ENCODE measurements at regions of chr18 and their contacts with region 1.

Region 1: DNA sequence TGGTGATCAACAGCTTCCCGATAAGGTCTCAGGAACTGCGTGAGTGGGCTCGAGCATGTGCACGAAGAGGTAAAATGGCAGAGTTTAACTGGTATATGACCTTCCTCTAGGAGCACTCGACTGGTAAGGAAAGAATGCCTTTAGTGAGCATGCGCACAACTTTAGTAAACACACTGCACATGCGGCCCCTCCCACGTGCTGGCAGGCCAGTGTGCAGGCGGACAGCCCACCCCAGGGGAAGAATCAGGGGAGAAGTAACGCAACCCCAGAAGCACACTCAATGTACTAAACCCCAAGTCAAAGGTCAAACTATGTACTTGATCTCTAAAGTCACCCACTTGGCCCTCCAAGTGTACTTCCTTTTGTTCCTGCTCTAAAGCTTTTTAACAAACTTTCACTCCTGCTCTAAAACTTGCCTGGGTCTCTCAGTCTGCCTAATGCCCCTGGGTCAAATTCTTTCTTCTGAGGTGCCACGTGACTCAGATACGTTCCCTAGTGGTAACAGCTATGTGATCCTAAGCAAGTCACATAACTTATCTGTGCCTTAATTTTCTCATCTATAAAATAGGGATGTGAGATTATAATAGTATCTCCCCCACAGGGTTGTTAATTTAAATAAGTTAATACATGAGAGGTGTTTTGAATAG is 28.9 kb upstream of the SLC25A52 start:
- DNase-seq: no peak
- ATAC-seq: no peak
- H3K4me3 ChIP-seq: no peak overlapping the region
- H3K27ac ChIP-seq: no peak overlapping the region
- H3K4me1 ChIP-seq: no peaks in the 10 kb centered on the region
- H3K27me3 ChIP-seq: no peaks in the 10 kb centered on the region
- CTCF ChIP-seq: no peak

Region 2: DNA sequence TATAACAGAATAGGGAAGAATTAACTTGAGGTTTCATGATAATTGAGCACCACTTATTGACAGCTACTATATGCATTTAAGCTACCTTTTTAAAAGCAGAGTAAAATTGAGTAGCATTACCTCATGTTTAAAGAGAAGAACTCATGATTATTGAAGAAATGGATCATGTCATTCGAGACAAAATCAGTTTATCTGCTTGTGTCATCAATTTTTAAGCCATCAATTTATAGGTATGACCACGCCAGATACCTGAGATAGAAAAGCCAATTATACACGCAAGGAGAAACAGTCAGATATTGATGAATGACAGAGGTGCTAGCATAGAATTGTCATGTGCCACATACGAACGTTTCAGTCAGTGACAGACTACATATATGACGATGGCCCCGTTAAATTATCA is 263.2 kb before region 1 on chr18:
- CTCF ChIA-PET with region 1: no interaction called
- POLR2A ChIA-PET with region 1: interaction called, 11 read pairs
- in situ Hi-C with region 1: no loop called
- intact Hi-C with region 1: no loop called
- DNase-seq: no peak
- ATAC-seq: no peak
- H3K4me3 ChIP-seq: no peak overlapping the region
- H3K27ac ChIP-seq: no peak overlapping the region
- H3K4me1 ChIP-seq: no peaks in the 10 kb centered on the region
- H3K27me3 ChIP-seq: no peaks in the 10 kb centered on the region
- CTCF ChIP-seq: no peak

Measured in Panc1 (cell line).